Ascending aorta (tissue), 2 donors: ENCODE measurements at regions of chr14 and their contacts with region 1.

Region 1: DNA sequence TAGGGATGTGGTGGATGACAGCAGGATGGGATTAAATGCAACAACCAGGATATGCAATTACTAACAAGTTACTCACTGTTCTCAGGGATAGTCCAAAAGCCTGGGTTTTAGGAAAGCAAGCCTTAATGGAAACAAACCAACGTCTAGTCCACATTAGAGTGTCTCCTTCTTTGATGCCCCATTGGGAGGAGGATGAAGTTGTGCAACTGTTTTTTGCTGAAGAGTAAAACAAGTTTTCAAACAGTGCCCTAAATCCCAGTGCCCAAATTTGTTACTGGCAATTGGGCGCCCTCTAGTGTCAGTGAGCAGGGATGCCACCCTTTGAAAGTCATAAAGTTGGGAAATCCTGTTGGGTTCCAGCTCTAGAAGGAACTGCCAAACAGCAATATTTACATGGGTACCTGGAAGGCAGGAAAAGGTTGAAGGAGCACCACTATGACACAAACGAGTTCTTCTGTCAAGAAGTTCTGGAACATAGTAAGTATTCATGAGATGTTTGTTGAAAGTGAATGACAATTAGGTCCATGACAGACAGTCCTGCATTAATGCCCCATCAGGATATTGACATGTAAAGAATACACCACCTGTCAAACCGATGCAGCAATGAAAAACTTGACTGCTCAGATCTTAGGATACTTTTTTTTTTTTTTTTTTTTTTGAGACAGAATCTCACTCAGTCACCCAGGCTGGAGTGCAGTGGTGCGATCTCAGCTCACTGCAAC is 11.1 kb upstream of the DPF3 start:
- DNase-seq: peak in 1 of 2 donors; percentile 78
- H3K4me3 ChIP-seq: no peak overlapping the region
- H3K27ac ChIP-seq: no peak overlapping the region
- H3K4me1 ChIP-seq: peaks cover 4 to 17% of the 10 kb centered on the region in 2 donors
- H3K27me3 ChIP-seq: no peaks in the 10 kb centered on the region
- CTCF ChIP-seq: peak; percentile 87 to 95 (median 90)

Region 2: DNA sequence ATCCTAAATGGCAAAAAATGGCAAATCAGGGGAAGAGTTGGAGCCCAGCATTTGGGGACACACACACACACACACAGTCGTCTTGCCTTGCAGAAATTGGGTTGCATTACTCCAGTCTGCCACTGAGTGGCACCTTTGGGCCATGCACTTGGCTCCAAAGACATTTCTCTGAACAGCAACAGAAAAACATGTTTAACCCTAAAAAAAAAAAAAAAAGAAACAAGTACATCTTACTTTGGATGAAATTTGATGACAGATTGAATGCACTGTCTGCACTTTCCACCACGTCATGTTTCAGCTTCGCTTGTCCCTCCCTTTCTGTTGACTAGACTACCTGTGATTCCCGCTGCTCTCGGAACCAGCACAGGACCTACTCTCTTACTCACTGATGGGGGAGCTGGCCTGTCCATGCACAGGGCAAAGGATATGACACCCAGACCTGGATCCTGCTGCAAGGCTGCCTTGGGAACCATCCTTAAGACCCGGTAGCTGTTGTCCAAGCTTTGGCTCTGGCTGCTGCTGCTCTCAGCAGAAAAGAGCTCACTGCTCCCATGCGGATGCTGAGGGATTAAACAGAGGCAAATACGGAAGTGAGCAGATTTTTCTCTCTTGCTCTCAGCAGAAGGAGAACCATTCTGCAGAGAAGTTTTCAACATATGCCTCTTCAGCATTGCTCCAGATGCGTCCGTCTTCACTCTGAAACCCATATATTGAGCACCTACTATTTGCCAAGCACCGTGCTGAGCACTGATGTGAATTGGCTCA is 387.9 kb before region 1 on chr14:
- intact Hi-C with region 1: loop called (anchors 1 kb)
- DNase-seq: peak in 1 of 2 donors; percentile 81
- H3K4me3 ChIP-seq: peak overlapping the region in 1 of 2 donors; percentile 9
- H3K27ac ChIP-seq: no peak overlapping the region
- H3K4me1 ChIP-seq: peaks cover 2 to 3% of the 10 kb centered on the region in 2 donors
- H3K27me3 ChIP-seq: no peaks in the 10 kb centered on the region
- CTCF ChIP-seq: peak; percentile 83 to 92 (median 84)

Region 3: DNA sequence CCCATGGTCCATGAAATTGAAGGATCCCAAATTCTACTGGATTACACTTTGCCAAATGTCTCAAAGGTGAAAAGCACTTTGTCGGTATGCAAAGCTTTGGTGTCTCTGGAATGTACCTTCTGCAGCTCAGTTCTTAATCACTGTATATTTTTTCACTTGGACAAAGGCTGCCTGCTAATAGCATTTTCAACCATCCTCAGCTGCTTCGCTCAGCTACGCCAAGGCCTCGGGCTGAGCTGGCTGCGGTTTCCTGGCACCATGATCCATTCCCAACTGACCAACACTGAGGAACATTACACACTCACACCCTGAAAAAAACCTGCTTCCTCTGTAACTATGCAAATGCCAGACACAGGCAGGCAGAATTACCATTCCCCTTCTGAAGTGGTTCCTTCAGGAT is 346.3 kb before region 1 on chr14:
- intact Hi-C with region 1: loop called (anchors 5 kb)
- DNase-seq: no peak
- H3K4me3 ChIP-seq: no peak overlapping the region
- H3K27ac ChIP-seq: peak overlapping the region; percentile 55 to 75
- H3K4me1 ChIP-seq: peaks cover 3 to 23% of the 10 kb centered on the region in 2 donors
- H3K27me3 ChIP-seq: no peaks in the 10 kb centered on the region
- CTCF ChIP-seq: no peak

Region 4: DNA sequence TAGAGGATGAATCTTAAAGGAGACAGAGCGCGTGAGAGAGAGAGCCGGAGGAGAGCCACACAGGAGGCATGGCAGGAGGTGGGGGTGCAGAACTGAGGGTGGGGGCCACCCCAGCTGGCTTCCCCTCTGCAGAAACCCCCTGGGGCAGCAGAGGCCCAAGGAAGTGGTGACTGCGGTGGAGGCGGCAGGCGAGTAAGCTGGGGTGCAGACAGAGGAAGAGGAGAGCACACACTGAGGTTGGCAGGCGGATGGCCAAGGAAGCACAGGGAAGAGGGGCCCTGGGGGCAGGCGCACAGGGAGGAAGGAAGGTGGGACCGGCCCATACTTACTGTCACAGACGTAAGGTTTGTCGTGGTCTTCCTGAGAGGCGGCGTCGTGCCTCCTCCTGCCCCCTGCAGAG is 190.9 kb before region 1 on chr14:
- intact Hi-C with region 1: loop called (anchors 10 kb)
- DNase-seq: no peak
- H3K4me3 ChIP-seq: no peak overlapping the region
- H3K27ac ChIP-seq: peak overlapping the region in 1 of 2 donors; percentile 72
- H3K4me1 ChIP-seq: peaks cover 19 to 31% of the 10 kb centered on the region in 2 donors
- H3K27me3 ChIP-seq: no peaks in the 10 kb centered on the region
- CTCF ChIP-seq: no peak

Region 5: DNA sequence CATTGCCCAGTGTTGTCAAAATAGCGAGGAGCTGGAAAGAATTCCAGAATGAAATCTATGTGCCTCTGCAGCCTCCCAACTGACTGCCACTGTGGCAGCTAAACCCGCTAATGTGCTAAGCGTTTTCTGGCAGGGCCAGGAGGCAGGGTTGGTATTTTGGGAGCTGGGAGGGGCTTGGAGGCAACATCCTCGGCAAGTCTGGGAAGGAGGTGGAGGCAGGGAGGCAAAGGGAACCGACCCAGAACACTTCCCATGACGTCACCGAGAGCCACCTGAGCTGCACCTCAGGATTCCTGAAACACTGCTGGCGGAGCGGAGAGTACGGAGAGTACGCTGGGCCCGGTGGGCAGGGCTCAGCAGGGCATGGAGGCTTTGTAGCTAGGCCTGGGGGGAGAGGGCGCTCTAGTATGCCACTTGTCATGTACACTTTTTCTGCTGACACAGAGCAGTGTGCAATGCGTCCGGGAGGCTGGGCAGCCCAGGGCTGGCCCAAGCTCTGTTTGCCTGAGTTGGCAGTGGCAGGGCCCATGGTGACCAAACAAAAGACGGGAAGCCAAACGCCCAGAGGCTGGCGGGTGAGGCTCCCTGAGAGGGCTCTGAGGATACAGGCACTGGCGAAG is 92.6 kb before region 1 on chr14:
- intact Hi-C with region 1: loop called (anchors 5 kb)
- DNase-seq: peak; percentile 68 to 87
- H3K4me3 ChIP-seq: peak overlapping the region in 1 of 2 donors; percentile 35
- H3K27ac ChIP-seq: peak overlapping the region; percentile 87 to 89
- H3K4me1 ChIP-seq: peaks cover 8 to 13% of the 10 kb centered on the region in 2 donors
- H3K27me3 ChIP-seq: no peaks in the 10 kb centered on the region
- CTCF ChIP-seq: peak in 1 of 3 experiments; percentile 18

Region 6: GRCh38 chr14:72926292-72927028 is 21.5 kb after region 1 on chr14 and contains the start of gene DCAF4:
- intact Hi-C with region 1: loop called (anchors 2 kb)
- DNase-seq: peak; percentile 92 to 98
- H3K4me3 ChIP-seq: peak within 1 kb of the TSS; percentile 60 to 91
- H3K27ac ChIP-seq: peak within 1 kb of the TSS; percentile 67 to 77
- H3K4me1 ChIP-seq: peaks cover 5% of the 10 kb centered on the region in 2 donors
- H3K27me3 ChIP-seq: no peaks in the 10 kb centered on the region
- CTCF ChIP-seq: no peak
- total RNA-seq, gene DCAF4: 0.64 TPM

Region 7: DNA sequence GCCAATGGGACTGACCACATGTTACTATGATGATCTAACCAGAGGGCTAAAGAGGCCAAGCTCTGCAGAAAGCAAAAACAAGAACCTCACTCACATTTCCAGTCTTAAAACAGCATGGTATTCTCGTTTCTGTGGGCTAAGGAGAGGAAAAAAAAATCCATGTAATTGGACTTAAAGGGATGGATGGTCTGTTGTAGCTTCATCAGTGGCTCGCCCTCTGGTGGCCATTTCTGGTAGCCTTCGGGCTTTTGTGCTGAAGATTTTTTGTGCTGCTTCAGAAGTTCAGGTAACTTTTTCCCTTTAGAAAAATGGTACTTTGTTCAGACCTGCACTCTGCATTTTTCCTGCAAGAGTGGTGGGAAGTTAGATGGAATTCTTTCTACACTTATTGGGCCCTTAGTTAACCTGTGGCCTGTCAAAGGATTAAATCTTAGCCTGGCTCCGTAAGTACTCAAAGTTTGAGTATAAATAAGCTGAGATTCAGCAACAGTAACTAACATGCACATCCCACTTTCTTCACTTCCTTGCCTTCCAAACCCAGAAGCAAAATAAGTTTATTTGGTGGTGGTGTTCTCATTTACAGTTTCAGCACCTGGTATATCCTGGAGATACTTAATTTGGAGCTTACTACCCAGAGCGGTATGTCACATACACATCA is 43.6 kb after region 1 on chr14:
- intact Hi-C with region 1: loop called (anchors 5 kb)
- DNase-seq: peak in 1 of 2 donors; percentile 79
- H3K4me3 ChIP-seq: no peak overlapping the region
- H3K27ac ChIP-seq: no peak overlapping the region
- H3K4me1 ChIP-seq: no peaks in the 10 kb centered on the region
- H3K27me3 ChIP-seq: no peaks in the 10 kb centered on the region
- CTCF ChIP-seq: peak; percentile 47 to 93 (median 87)